ENCODE measurements at regions of chr12 and their contacts with region 1.

Region 1: DNA sequence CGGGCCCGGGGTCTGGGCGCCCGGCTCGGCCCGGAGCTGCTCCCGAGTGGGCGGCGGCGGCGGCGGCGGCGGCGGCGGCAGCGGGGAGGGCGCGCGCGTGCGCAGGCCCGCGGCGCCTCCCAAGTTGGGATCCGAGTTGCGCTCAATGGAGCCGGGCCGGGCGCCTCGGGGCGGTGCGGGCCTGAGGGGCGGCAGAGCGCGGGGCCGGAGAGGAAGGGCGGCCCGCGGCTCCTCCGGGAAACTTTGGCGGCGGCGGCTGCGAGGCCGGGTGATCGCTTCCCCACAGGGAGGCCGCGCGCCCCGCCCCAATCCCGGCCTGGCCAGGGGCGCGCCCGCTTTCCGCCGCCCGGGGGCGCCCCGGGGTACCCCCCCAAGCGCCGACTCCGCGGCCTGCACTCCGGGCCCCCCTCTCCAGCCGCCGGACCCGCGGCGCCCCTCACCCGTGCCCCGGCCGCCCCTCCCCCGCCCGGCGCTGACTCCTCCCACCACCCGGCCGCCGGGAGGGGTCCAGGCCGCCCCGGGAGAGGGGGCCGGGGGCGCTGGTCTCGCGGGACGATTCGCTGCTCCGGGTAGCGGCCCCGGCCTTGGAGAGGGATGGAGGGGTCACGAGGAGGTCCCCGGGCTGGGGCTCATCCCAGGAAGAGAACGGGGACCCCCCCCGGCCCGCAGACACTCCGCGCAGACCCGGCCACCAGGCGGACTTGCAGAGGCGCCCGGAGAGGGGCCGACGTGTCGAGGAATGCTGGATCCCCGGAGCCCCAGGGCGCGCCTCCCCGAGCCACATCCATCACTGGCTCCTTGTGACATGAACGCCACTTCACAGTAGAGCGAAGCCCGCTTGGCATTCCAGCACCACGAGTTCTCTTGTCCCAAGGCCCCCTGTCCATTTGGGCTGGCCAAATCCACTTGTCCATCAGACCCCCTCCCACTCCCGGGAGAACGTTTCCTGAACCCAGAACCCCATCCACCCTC is at the start of gene RILPL1:
- DNase-seq: peak; percentile 32
- H3K4me3 Mint-ChIP-seq: peak within 1 kb of the TSS; percentile 85
- H3K27ac Mint-ChIP-seq: peak within 1 kb of the TSS; percentile 54
- H3K4me1 Mint-ChIP-seq: peaks cover 7% of the 10 kb centered on the region
- H3K27me3 Mint-ChIP-seq: peaks cover 1% of the 10 kb centered on the region
- CTCF ChIP-seq: peak; percentile 31
- total RNA-seq, gene RILPL1: 21.5 and 22.9 TPM in 2 replicates

Region 2: DNA sequence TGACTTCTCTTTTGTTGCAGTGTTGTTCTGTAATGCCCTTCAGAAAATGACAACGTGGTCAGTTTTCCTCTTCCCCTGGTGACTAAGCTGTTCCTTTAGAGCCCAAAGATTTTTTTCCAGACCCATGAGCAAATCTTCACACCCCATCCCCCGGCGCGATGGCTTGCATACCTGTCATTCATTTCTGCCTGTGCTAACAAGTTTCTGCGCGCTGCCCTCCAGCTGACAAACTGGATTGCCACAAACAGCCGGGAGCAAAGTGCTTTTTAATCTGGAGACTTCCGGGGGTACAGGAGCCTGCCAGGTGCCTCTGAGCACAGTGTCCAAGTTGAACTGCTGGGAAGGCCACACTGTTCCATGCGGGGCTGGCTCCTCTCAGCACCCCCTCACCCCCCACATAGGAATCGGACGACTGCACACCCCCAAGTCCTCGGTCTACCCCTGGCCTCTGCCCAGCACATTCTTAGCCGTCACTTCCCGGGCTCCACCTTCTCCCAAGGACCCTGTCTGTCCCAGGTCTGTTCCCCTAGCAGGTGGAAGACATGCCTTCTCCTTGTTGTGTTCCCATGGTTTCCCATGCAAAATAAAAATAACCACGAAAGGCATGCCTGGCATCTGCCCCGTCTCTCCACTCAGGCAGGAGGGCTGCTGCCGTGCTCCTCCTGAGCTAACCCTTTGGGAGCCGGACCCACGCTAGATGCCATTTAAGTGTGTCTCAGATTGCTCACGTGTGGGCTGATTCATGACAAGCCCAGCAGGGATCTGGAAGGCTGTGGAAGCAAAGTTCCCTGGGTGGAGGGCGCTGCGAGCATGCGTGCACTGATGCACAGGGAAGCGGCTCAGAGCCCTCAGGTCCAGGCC is 14.6 kb before region 1 on chr12:
- CTCF ChIA-PET with region 1: interaction called, 3 read pairs
- POLR2A ChIA-PET with region 1: interaction called, 28 read pairs
- intact Hi-C with region 1: no loop called
- DNase-seq: peak; percentile 94
- H3K4me3 Mint-ChIP-seq: peak overlapping the region; percentile 64
- H3K27ac Mint-ChIP-seq: peak overlapping the region; percentile 99
- H3K4me1 Mint-ChIP-seq: peaks cover 19% of the 10 kb centered on the region
- H3K27me3 Mint-ChIP-seq: no peaks in the 10 kb centered on the region
- CTCF ChIP-seq: no peak